ENCODE measurements at regions of chr6 and their contacts with region 1.

Region 1: GRCh38 chr6:36678518-36679027 is at the start of gene CDKN1A:
- DNase-seq: peak; percentile 57 to 97 (median 80)

Region 2: GRCh38 chr6:36423101-36423824 is 255.3 kb before region 1 on chr6:
- intact Hi-C with region 1: loop called (anchors 10 kb)
- DNase-seq: peak; percentile 94 to 99 (median 98)

Region 3: DNA sequence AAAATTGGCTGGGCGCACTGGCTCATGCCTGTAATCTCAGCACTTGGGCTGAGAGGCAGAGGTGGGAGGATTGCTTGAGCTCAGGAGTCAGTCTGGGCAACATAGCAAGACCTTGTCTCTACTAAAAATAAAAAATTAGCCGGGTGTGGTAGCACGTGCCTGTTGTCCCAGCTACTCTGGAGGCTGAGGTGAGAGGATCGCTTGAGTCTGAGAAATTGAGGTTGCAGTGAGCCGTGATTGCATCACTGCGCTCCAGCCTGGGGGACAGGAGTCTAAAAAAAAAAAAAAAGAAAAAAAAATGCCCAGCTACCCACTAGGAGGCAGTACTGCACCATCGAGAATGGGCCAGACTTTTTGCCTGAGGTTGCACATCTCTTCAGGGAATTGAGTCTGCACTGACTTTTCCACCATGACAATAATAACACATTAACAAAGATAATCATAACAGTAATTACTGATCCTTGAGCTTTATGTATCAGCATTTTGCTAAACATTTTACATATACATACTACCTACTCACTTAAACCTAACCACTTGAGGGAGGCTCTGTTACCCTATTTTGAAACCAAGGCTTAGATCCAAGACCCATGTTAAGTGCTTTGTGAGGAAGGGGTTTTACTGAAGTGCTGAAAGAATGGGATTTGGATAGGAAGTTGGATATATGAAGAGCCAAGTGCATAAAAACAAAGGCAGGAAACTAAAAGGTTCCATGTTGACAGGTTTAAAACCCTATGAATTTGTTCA is 63.4 kb before region 1 on chr6:
- intact Hi-C with region 1: loop called (anchors 1 kb)
- DNase-seq: peak in 2 of 10 donors; percentile 54 to 76

Region 4: DNA sequence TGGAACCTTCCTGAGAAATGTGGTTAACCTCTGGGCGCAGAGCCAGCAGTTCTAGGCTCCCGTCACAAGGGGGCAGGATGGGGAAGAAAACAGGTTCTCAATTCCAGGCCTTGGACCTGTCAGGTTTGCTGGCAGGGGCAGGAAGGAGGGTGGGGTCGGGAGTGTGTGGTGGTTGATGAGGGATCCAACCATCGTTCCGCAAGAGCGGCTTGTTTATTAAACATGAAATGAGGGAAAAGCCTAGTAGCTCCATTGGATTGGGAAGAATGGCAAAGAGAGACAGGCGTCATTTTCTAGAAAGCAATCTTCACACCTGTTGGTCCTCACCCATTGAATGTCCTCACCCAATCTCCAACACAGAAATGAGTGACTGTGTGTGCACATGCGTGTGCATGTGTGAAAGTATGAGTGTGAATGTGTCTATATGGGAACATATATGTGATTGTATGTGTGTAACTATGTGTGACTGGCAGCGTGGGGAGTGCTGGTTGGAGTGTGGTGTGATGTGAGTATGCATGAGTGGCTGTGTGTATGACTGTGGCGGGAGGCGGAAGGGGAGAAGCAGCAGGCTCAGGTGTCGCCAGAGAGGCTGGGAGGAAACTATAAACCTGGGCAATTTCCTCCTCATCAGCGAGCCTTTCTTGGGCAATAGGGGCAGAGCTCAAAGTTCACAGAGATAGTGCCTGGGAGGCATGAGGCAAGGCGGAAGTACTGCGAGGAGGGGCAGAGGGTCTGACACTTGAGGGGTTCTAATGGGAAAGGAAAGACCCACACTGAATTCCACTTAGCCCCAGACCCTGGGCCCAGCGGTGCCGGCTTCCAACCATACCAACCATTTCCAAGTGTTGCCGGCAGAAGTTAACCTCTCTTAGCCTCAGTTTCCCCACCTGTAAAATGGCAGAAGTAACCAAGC is 54.8 kb before region 1 on chr6:
- intact Hi-C with region 1: loop called (anchors 1 kb)
- DNase-seq: peak; percentile 45 to 96 (median 82)

Region 5: GRCh38 chr6:36633915-36634314 is 44.7 kb before region 1 on chr6:
- intact Hi-C with region 1: no loop called
- DNase-seq: peak in 3 of 10 donors; percentile 24 to 61 (median 48)

Region 6: GRCh38 chr6:36839749-36840431 is 161.3 kb after region 1 on chr6:
- intact Hi-C with region 1: no loop called
- DNase-seq: peak in 7 of 10 donors; percentile 42 to 93 (median 55)